Sigmoid colon (tissue), 7 donors: ENCODE measurements at regions of chr7 and their contacts with region 1.

Region 1: GRCh38 chr7:2451171-2452073 is 24.8 kb downstream of the GRIFIN start:
- DNase-seq: peak; percentile 89
- H3K4me3 ChIP-seq: peak overlapping the region; percentile 15 to 50 (median 38)
- H3K27ac ChIP-seq: peak overlapping the region in 1 of 4 donors; percentile 43
- H3K4me1 ChIP-seq: peaks cover 0 to 12% (median 11%) of the 10 kb centered on the region in 4 donors
- H3K27me3 ChIP-seq: no peaks in the 10 kb centered on the region
- CTCF ChIP-seq: peak; percentile 65 to 89 (median 76)
- EP300 ChIP-seq: no peak
- POLR2A ChIP-seq: no peak

Region 2: DNA sequence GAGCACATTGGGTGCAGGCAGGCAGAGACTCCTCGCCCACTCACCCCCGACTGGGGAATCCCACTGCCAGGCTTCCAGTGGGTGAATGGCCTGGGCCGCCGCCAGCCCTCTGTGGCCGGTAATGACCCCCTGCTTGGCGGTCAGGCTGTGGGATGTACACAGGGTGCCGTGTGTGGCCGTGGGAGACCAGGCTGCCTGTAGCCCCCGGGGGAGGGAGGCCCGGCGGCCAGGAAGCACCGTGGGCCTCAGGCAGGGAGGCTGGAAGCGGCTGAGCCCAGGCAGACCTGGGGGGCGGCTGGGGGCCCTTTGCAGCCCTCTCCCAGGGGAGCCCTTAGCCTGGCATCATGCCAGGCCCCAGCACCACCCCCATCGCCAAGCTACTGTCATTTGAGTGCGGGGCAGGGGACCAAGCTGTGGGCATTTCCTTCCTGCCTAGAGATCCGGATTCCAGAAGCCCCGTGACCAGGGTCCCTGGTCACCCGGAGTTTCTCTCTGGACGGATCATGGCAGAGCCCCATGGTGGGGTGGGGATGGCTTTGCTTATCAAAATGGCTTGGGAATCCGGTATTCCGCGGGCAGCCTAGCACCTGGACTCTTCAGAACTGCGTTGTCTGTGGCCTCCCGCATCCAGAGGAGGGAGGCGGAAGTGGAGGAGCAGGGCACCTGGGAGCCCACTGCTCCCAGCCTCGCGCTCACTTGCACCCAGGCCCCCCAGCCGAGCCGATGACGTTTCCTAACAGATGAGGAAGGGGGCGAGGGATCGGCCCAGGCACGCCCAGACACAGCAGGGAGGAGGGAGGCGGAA is 181.5 kb after region 1 on chr7:
- intact Hi-C with region 1: no loop called
- DNase-seq: peak; percentile 85
- H3K4me3 ChIP-seq: peak overlapping the region; percentile 67 to 99 (median 80)
- H3K27ac ChIP-seq: peak overlapping the region; percentile 77 to 85 (median 82)
- H3K4me1 ChIP-seq: peaks cover 0 to 60% (median 46%) of the 10 kb centered on the region in 4 donors
- H3K27me3 ChIP-seq: no peaks in the 10 kb centered on the region
- CTCF ChIP-seq: no peak
- EP300 ChIP-seq: no peak
- POLR2A ChIP-seq: no peak

Region 3: GRCh38 chr7:2680792-2681490 is 229.5 kb after region 1 on chr7:
- intact Hi-C with region 1: loop called (anchors 10 kb)
- DNase-seq: peak; percentile 85
- H3K4me3 ChIP-seq: no peak overlapping the region
- H3K27ac ChIP-seq: no peak overlapping the region
- H3K4me1 ChIP-seq: peaks cover 0 to 8% (median 0%) of the 10 kb centered on the region in 4 donors
- H3K27me3 ChIP-seq: peaks cover 6 to 64% (median 28%) of the 10 kb centered on the region in 3 donors
- CTCF ChIP-seq: peak; percentile 43 to 60 (median 53)
- EP300 ChIP-seq: no peak
- POLR2A ChIP-seq: no peak

Region 4: DNA sequence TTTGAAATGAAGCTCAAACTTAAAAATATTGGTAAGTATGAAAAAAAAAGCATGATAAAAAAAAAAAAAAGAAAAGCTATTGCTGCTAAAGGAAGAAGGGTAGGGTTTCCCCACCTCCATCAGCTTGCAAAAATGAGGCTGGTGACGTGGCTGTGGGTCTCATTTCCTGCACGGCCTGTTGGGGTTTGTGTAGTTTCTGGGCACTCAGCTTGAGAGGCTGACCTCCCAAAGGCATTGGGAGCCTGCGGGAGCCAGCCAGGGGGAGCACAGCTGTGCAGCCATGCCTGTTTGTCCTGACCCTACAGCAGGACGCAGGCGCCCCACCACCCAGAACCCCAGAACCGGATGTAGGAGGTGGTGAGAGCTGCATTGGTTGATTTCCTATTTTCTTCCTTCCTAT is 641.0 kb after region 1 on chr7:
- intact Hi-C with region 1: no loop called
- DNase-seq: peak; percentile 71
- H3K4me3 ChIP-seq: no peak overlapping the region
- H3K27ac ChIP-seq: no peak overlapping the region
- H3K4me1 ChIP-seq: no peaks in the 10 kb centered on the region
- H3K27me3 ChIP-seq: peaks cover 0 to 7% (median 0%) of the 10 kb centered on the region in 3 donors
- CTCF ChIP-seq: no peak
- EP300 ChIP-seq: no peak
- POLR2A ChIP-seq: no peak